ENCODE measurements at regions of chr11 and their contacts with region 1.

Region 1: GRCh38 chr11:43680521-43681400 is at the start of gene HSD17B12:
- DNase-seq: peak; percentile 99
- H3K4me3 Mint-ChIP-seq: peak within 1 kb of the TSS; percentile 91
- H3K27ac Mint-ChIP-seq: peak within 1 kb of the TSS; percentile 89
- H3K4me1 Mint-ChIP-seq: peaks cover 31% of the 10 kb centered on the region
- H3K27me3 Mint-ChIP-seq: no peaks in the 10 kb centered on the region
- total RNA-seq, gene HSD17B12: 31.7 to 33.8 TPM

Region 2: DNA sequence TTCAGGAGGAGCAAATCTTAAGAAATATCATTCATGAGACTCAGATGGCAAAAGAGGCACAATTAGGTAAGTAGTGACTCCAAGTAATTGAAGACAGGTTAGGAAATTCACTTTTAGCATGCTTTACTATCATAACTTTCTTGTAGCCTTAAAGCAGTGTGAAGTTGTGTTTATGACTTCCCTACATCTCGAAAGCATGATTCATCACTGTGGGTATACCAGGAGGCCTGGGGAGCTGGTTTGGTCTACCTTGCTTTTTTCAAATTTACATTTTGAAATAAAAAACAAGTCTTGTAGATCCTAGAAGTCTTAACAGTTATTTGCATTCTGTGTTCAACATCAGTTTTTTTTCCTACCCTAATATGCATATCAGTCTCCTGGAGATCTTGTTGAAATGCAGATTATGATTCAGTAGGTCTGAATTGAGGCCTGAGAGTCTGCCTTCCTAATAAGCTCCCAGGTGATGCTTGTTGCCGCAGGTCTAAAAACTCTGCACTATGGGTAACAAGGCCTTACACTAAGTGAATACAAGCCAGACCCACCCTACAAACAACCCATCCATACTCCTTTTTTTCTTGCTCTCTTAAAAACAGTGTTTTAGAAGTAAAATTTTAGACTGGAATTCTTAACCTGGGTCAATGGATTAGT is 280.7 kb before region 1 on chr11:
- CTCF ChIA-PET with region 1: no interaction called
- intact Hi-C with region 1: loop called (anchors 2 kb)
- DNase-seq: peak; percentile 48
- H3K4me3 Mint-ChIP-seq: no peak overlapping the region
- H3K27ac Mint-ChIP-seq: peak overlapping the region; percentile 47
- H3K4me1 Mint-ChIP-seq: peaks cover 46% of the 10 kb centered on the region
- H3K27me3 Mint-ChIP-seq: no peaks in the 10 kb centered on the region

Region 3: DNA sequence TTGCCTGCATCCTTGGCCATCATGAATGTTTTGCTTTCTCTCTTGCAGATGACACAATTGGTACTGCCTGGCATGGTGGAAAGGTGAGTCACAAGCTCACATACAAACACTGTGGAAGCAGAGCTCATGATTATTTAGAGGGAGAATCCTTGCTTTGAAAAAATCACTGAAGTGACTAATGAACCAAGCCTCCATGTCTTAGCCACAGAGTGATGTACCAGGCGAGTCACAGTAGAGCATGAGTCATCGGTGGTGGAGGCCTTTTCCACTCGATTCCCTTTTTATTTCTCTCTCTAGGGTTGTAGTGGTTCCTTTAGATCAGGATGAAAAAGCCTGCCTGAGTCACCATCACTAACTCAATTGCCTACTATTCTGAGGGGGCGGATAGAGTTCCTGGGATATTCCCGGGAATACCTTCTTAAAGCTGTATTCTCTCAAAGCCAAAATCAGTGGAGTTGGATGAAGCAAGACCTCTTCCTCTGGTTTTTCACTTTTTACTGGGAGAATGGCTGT is 150.2 kb after region 1 on chr11:
- CTCF ChIA-PET with region 1: interaction called, 3 read pairs
- intact Hi-C with region 1: loop called (anchors 1 kb)
- DNase-seq: peak; percentile 80
- H3K4me3 Mint-ChIP-seq: no peak overlapping the region
- H3K27ac Mint-ChIP-seq: peak overlapping the region; percentile 86
- H3K4me1 Mint-ChIP-seq: peaks cover 15% of the 10 kb centered on the region
- H3K27me3 Mint-ChIP-seq: no peaks in the 10 kb centered on the region

Region 4: DNA sequence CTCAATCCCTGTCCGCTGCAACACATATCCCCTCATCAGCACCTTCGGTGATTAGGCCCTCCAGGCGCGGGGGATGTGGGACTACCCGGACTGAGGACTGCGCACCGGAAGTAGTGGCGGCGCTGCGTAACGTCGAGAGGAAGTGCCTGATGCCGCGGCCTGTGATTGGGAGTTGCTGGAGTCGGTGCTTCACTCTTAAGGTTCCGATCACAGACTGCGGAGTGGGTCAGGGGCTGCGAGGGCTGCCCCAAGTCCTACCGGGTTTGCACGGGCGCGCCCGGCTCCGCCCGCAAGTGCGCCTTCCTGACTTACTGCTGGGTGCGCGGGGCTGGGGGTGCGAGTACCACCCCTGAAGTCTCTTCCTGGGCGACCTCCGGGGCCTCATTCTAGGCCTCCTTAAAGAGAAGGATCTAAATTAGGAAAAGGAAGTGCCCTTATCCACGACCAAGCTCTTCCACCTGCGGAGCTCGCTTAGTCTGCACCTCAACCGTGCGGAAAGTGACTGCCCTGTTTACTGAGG is 199.9 kb after region 1 on chr11 and contains the start of gene ALKBH3:
- CTCF ChIA-PET with region 1: no interaction called
- intact Hi-C with region 1: loop called (anchors 1 kb)
- DNase-seq: peak; percentile 94
- H3K4me3 Mint-ChIP-seq: peak within 1 kb of the TSS; percentile 81
- H3K27ac Mint-ChIP-seq: peak within 1 kb of the TSS; percentile 68
- H3K4me1 Mint-ChIP-seq: peaks cover 32% of the 10 kb centered on the region
- H3K27me3 Mint-ChIP-seq: no peaks in the 10 kb centered on the region
- total RNA-seq, gene ALKBH3: 33.5 to 36.6 TPM

Region 5: DNA sequence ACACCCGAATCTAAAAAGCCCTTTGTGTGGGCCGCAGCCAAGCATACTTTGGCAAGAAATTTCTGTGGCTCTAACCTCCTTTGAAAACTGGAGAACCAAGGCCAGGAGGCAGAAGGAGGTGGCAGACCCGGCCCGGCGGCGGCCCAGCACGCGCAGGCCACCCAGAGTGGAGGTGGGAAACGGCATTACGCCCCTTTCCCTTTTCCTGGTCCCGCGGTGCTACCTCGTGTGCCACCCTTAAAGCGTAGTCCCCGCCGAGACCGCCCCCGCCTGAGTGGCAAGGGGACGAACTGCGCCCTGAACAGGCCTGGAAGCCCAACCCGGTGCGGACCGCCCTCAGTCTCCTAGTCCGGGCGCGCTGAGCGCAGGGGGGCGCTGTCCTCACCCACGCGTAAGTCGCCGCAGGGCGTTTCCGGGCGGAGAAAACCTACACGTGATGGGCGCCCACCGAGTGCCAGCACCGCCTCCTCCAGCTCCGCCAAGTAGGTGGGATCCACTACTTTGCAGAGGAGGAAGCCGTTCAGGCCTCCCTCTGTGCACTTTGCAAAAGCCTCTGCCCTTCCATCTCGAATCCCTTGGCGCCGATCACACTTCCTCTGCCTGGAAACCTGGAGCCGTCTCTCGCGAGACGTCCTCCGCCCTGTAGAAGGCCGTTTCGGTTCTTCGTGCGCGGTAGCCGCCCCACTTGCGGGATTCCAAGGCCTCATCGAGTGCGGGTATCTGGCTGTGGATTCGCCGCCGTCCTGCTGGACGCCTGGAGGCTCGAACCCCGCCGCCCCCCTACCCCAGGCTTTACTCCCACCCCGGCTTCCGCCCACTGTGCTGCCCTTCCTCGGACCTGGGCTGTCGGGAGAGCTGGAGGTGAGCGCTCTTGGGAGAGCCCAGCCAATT is 385.3 kb after region 1 on chr11 and contains the start of gene ACCS:
- CTCF ChIA-PET with region 1: no interaction called
- intact Hi-C with region 1: loop called (anchors 2 kb)
- DNase-seq: peak; percentile 92
- H3K4me3 Mint-ChIP-seq: peak within 1 kb of the TSS; percentile 88
- H3K27ac Mint-ChIP-seq: peak within 1 kb of the TSS; percentile 93
- H3K4me1 Mint-ChIP-seq: peaks cover 20% of the 10 kb centered on the region
- H3K27me3 Mint-ChIP-seq: no peaks in the 10 kb centered on the region
- total RNA-seq, gene ACCS: 16.2 to 16.6 TPM

Measured in activated naive CD4-positive, alpha-beta T cell treated with anti-CD3 and anti-CD28 coated beads for 36 hours (primary cell).